Activated CD8-positive, alpha-beta T cell treated with anti-CD3 and anti-CD28 coated beads for 36 hours (primary cell): ENCODE measurements at regions of chr1 and their contacts with region 1.

Region 1: GRCh38 chr1:39799770-39800470 is 11.3 kb upstream of the BMP8B start:
- DNase-seq: peak; percentile 75
- ATAC-seq: peak; percentile 74
- H3K4me3 Mint-ChIP-seq: peak overlapping the region; percentile 48
- H3K27ac Mint-ChIP-seq: peak overlapping the region; percentile 81
- H3K4me1 Mint-ChIP-seq: peaks cover 8% of the 10 kb centered on the region
- H3K27me3 Mint-ChIP-seq: no peaks in the 10 kb centered on the region
- CTCF ChIP-seq: peak; percentile 96

Region 2: GRCh38 chr1:39462074-39462473 is 337.8 kb before region 1 on chr1:
- CTCF ChIA-PET with region 1: no interaction called
- POLR2A ChIA-PET with region 1: no interaction called
- intact Hi-C with region 1: no loop called
- DNase-seq: no peak
- ATAC-seq: no peak
- H3K4me3 Mint-ChIP-seq: no peak overlapping the region
- H3K27ac Mint-ChIP-seq: no peak overlapping the region
- H3K4me1 Mint-ChIP-seq: peaks cover 11% of the 10 kb centered on the region
- H3K27me3 Mint-ChIP-seq: no peaks in the 10 kb centered on the region
- CTCF ChIP-seq: no peak

Region 3: DNA sequence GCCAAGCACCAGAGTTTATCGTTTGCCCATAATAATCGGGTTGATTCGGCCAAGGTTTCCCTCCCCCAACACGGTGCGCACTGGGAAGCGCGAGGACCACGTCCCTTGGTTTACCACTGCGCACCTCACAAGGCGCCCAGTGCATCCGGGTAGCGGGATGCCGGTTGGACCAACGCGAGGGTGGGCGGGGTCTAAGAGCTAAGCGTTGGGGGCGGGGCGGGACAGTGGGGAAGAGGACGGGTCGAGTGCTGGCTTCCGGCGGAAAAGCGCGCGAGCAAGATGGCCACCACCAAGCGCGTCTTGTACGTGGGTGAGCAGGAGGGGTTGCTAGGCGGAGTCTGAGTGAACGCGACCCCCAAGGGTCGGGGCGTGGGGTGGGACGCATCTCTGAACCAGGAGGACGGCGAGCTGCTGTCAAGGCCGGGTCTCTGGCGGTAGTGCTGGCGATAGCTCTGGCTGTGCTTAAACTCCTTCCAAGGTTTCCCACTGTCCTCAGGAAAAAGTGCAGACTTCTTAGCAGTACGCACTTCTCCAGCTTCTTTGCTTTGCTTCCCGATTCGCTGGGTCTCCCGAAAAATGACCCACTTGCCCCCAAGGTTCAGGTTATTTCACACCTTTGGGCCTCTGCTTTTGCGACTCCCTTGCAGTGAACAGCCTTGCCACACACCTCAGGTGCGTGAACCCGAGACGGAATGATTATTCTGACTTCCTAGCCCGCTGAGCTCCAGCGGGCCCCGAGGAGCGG is 61.1 kb before region 1 on chr1 and contains the start of gene PPIE:
- CTCF ChIA-PET with region 1: interaction called, 17 read pairs
- POLR2A ChIA-PET with region 1: interaction called, 4 read pairs
- intact Hi-C with region 1: no loop called
- DNase-seq: peak; percentile 99
- ATAC-seq: peak; percentile 99
- H3K4me3 Mint-ChIP-seq: peak within 1 kb of the TSS; percentile 93
- H3K27ac Mint-ChIP-seq: peak within 1 kb of the TSS; percentile 92
- H3K4me1 Mint-ChIP-seq: peaks cover 43% of the 10 kb centered on the region
- H3K27me3 Mint-ChIP-seq: peaks cover 8% of the 10 kb centered on the region
- CTCF ChIP-seq: no peak
- total RNA-seq, gene PPIE: 71.7 to 74.7 TPM

Region 4: GRCh38 chr1:39761525-39762260 is 38.2 kb before region 1 on chr1:
- CTCF ChIA-PET with region 1: no interaction called
- POLR2A ChIA-PET with region 1: no interaction called
- intact Hi-C with region 1: no loop called
- DNase-seq: no peak
- ATAC-seq: no peak
- H3K4me3 Mint-ChIP-seq: no peak overlapping the region
- H3K27ac Mint-ChIP-seq: no peak overlapping the region
- H3K4me1 Mint-ChIP-seq: no peaks in the 10 kb centered on the region
- H3K27me3 Mint-ChIP-seq: no peaks in the 10 kb centered on the region
- CTCF ChIP-seq: no peak

Region 5: DNA sequence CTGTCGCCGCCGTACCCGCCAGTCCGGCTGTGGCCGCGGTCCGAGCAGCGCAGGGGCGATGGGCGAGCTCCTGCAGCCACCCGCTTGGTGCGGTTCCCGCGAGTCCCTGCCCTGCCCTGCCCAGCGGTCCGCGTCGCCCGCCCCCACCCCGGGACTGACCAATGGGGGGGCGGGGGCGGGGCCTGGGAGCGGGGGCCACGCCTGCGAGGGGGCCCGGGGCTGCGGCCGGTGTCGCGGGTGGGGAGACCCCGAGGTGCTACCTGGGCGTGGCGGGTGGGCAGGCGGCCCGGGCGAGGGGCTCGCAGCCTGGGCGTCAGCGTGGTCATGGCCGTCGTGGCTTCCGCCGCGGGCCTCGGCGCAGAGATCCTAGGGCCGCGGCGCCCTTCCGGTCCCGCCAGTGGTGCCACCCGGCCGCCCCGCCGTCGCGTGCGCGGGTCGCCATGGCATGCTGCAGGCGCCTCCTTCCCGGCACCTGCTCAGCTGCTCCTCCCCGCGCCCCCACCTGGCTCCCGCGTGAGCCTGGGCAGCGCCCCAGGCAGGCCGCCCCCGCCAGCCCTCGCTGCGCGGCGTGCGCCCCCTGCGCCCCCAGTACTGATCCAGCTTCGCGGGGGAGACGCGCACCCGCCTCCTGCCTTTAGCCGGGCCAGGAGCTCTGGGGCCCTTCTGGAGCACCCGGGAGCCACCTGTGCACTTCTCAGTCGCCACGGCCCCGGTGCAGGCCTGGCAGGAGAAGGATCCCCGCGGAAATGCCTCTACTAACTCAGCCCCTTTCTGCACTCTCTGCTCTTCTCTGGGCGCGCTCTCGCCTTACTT is 11.0 kb before region 1 on chr1 and contains the start of gene BMP8B:
- CTCF ChIA-PET with region 1: interaction called, 13 read pairs
- POLR2A ChIA-PET with region 1: interaction called, 4 read pairs
- intact Hi-C with region 1: no loop called
- DNase-seq: peak; percentile 52
- ATAC-seq: peak; percentile 79
- H3K4me3 Mint-ChIP-seq: peak within 1 kb of the TSS; percentile 72
- H3K27ac Mint-ChIP-seq: peak within 1 kb of the TSS; percentile 3
- H3K4me1 Mint-ChIP-seq: no peaks in the 10 kb centered on the region
- H3K27me3 Mint-ChIP-seq: peaks cover 36% of the 10 kb centered on the region
- CTCF ChIP-seq: no peak
- total RNA-seq, gene BMP8B: 0.36 to 0.51 TPM

Region 6: DNA sequence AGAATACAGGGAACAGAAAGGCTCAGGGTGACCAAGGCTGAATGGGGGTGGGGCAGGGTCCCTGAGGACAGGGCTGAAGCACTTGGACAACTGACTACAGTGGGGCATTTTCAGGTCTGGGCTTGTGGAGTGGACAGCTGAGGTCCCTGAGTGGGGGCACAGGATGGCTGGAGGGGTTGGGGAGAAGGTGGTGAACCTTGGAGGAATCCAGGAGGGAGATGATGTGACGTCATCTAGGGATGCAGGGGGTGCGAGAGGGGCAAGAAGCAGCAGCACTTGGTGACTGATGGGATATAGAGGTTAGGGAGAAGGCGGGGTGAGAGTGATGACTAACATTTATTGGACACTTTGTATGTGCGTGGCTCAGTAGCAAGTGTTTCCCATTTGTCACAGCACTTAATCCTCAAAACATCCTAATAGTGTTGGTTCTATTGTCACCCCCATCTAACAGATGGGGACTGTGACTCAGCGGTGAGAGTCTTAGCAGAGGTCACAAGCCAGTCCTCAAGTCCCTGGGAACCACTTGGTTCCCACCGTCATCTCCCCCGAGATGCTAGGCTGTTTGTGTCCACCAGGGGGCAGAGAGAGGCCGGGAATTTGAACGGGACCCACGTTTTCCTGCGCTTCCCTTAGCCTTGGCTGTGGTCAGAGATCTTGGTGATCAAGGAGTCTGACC is 16.6 kb after region 1 on chr1:
- CTCF ChIA-PET with region 1: interaction called, 10 read pairs
- POLR2A ChIA-PET with region 1: no interaction called
- intact Hi-C with region 1: no loop called
- DNase-seq: peak; percentile 69
- ATAC-seq: peak; percentile 82
- H3K4me3 Mint-ChIP-seq: peak overlapping the region; percentile 39
- H3K27ac Mint-ChIP-seq: no peak overlapping the region
- H3K4me1 Mint-ChIP-seq: peaks cover 14% of the 10 kb centered on the region
- H3K27me3 Mint-ChIP-seq: peaks cover 16% of the 10 kb centered on the region
- CTCF ChIP-seq: peak; percentile 77

Region 7: DNA sequence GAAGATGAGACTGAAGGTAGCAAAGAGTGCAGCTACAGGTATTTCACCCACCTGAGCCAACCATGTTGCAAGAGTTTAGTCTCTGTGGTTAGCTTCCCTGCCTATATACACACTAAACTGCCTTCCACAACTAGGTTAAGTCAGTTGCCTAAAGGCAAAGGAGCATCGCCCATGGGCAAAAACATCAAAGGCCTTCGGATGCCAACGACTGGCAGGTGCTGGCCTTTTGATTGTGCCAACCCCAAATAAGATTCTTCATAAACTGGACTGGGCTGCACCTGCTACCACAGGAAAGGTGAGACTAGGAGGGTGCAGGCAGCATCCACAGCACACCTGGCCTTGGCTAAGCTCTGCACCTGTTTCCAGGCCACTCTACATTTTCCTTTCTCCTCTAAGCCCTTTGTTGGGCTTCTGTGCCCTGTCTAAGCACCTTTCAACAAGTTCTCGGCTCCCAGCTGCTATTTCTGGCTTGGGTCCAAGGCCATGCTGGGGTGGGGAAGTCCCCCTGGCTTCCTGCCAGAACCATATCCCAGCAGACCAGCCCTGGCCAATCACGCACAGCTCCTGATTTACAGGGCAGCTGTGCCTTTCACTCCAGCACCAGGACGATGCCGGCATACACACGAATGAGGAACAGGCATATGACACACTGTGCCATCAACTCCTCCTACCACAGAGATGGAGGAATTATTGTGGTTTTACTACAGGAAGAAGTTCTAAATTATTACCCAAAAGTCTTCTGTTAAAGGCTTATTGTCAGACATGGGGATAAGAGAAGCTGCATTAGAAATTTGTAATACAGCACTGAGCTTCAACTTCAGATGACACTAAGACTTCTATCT is 45.6 kb after region 1 on chr1:
- CTCF ChIA-PET with region 1: interaction called, 13 read pairs
- POLR2A ChIA-PET with region 1: no interaction called
- intact Hi-C with region 1: no loop called
- DNase-seq: peak; percentile 90
- ATAC-seq: peak; percentile 95
- H3K4me3 Mint-ChIP-seq: no peak overlapping the region
- H3K27ac Mint-ChIP-seq: peak overlapping the region; percentile 87
- H3K4me1 Mint-ChIP-seq: peaks cover 55% of the 10 kb centered on the region
- H3K27me3 Mint-ChIP-seq: no peaks in the 10 kb centered on the region
- CTCF ChIP-seq: no peak